ENCODE measurements at regions of chr11 and their contacts with region 1.

Region 1: DNA sequence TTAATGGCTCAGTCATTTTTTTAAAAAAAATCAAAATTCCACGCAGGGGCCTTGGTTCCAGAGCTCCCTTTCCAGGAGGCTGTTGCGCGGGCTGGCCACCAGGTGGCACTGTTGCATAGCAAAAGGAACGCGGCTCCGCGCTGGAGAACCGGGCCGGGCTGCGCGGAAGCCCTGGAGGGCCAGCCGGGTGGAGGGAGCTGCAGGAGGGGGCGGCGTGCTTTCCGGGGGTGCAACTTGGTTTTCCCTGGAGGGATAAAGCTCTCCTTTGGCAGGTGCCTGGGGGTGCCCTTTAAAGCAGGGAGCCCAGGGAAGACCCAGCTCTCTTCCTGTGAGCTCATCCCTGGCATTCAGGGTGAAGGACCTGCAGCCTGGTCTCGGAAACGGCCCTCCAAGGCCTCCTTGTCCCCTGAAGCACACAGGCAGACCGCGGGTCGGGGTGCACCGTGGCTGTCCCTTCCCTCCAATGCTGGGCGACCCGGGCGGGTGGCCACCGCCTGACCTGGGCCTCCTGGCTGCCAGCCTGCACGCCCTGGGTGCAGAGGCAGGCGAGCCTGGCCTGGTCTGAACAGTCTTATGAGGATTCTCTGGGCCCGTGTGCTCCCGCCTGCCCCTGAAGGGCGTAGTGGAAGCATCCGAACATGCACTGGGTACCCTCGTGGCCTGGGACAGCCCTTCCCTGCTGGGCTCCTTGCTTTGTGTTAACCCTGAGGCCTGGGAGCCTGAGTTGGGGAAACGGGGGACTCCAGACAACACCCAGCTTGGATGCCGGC is 23.4 kb downstream of the KRTAP5-5 start:
- DNase-seq: peak; percentile 62 to 85 (median 77)
- H3K4me3 ChIP-seq: no peak overlapping the region
- H3K27ac ChIP-seq: no peak overlapping the region
- H3K4me1 ChIP-seq: no peaks in the 10 kb centered on the region
- H3K27me3 ChIP-seq: no peaks in the 10 kb centered on the region
- CTCF ChIP-seq: peak; percentile 81 to 91 (median 84)
- EP300 ChIP-seq: no peak
- POLR2A ChIP-seq: no peak

Region 2: DNA sequence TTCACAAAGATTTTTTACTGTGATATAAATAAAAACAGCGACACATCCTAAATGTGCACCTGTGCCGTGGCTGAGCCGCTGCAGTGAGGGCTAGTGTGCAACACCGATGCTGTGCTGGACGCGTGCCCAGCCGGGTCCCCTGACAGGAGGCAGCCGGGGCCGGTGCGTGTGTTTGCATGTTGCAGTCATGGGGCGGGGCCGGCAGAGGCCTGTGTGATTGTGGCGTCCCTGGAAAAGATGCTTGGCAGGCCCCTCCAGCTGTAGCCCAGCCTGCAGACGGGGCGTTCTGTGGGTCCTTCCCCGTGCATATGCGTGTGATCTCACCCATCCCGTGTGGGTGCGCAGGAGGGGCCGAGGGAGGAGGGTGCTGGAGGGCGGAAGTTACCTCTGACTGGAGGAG is 647.0 kb before region 1 on chr11:
- intact Hi-C with region 1: no loop called
- DNase-seq: peak; percentile 65 to 83 (median 74)
- H3K4me3 ChIP-seq: no peak overlapping the region
- H3K27ac ChIP-seq: peak overlapping the region in 1 of 2 donors; percentile 12
- H3K4me1 ChIP-seq: peaks cover 2% of the 10 kb centered on the region
- H3K27me3 ChIP-seq: no peaks in the 10 kb centered on the region
- CTCF ChIP-seq: no peak
- EP300 ChIP-seq: no peak
- POLR2A ChIP-seq: no peak

Region 3: DNA sequence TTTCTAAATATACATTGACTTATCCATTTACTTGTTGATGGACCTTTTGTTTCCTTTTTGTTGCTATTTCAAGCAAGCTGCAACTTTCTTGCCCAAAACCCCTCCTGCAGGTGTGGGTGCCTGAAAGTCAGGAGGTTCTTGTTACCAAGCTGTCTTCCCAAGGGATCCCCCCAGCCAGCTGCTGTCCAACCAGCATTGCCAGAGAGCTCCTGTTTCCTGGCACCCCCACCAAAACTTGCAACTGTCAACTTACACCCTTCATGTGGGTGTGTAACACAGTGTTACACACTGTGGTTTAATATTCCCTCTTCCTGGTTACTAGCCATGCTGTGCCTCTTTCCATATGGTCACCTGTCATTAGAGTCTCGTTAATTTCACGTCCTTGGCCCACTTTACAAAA is 66.3 kb before region 1 on chr11:
- intact Hi-C with region 1: no loop called
- DNase-seq: no peak
- H3K4me3 ChIP-seq: no peak overlapping the region
- H3K27ac ChIP-seq: no peak overlapping the region
- H3K4me1 ChIP-seq: no peaks in the 10 kb centered on the region
- H3K27me3 ChIP-seq: no peaks in the 10 kb centered on the region
- CTCF ChIP-seq: no peak
- EP300 ChIP-seq: no peak
- POLR2A ChIP-seq: no peak

Region 4: DNA sequence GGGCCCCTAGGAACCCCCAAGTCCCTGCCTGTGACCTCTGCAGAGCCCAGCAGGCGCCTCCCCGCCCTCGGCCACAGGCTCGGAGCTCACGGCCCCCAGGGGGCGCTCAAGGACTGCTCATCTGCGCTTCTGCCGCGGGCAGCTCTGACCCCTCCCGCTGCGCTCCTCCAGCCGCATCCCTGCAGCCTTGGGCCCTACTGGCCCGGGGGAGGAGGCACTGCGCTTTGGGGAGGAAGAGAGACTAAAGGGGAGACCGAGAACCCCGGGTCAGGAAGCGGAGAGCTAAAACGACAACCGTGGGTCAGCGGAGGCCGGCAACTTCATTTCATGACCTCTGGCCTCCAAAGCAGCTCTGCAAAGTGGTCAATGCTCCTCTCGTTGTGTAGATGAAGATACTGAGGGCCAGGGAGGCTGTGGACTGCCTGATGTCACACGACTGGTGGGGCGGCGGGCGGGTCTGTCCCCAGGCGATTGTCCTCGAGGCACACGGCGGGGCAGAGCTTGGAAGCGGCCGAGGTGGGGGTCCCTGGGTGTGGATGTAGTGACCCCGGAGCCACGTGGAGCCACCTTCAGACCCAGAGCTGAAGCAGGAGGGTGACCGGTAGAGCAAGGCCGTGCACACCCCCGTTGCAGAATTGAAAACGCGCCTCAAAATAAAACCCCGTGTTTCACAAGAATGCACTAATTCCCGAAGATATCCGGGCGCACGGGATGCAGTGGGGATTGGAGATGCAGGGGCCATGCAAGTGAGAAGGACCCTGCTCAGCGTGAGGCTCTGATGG is 41.3 kb after region 1 on chr11:
- intact Hi-C with region 1: loop called in 2 of 4 experiments (anchors 5 kb)
- DNase-seq: peak; percentile 73 to 92 (median 89)
- H3K4me3 ChIP-seq: peak overlapping the region; percentile 6
- H3K27ac ChIP-seq: peak overlapping the region in 1 of 2 donors; percentile 16
- H3K4me1 ChIP-seq: peaks cover 8% of the 10 kb centered on the region
- H3K27me3 ChIP-seq: no peaks in the 10 kb centered on the region
- CTCF ChIP-seq: peak; percentile 82 to 91 (median 85)
- EP300 ChIP-seq: no peak
- POLR2A ChIP-seq: no peak

Region 5: GRCh38 chr11:1825039-1825740 is 172.2 kb after region 1 on chr11:
- intact Hi-C with region 1: loop called in 2 of 4 experiments (anchors 5 to 10 kb)
- DNase-seq: no peak
- H3K4me3 ChIP-seq: no peak overlapping the region
- H3K27ac ChIP-seq: no peak overlapping the region
- H3K4me1 ChIP-seq: no peaks in the 10 kb centered on the region
- H3K27me3 ChIP-seq: no peaks in the 10 kb centered on the region
- CTCF ChIP-seq: no peak
- EP300 ChIP-seq: no peak
- POLR2A ChIP-seq: no peak

Region 6: GRCh38 chr11:1832211-1832919 is 179.4 kb after region 1 on chr11:
- intact Hi-C with region 1: loop called in 3 of 4 experiments (anchors 2 to 10 kb)
- DNase-seq: peak; percentile 33 to 75 (median 62)
- H3K4me3 ChIP-seq: no peak overlapping the region
- H3K27ac ChIP-seq: no peak overlapping the region
- H3K4me1 ChIP-seq: no peaks in the 10 kb centered on the region
- H3K27me3 ChIP-seq: no peaks in the 10 kb centered on the region
- CTCF ChIP-seq: peak; percentile 82 to 96 (median 86)
- EP300 ChIP-seq: no peak
- POLR2A ChIP-seq: no peak

Region 7: GRCh38 chr11:1837171-1838076 is 184.5 kb after region 1 on chr11:
- intact Hi-C with region 1: loop called in 2 of 4 experiments (anchors 2 to 10 kb)
- DNase-seq: peak; percentile 69 to 88 (median 78)
- H3K4me3 ChIP-seq: no peak overlapping the region
- H3K27ac ChIP-seq: no peak overlapping the region
- H3K4me1 ChIP-seq: peaks cover 1% of the 10 kb centered on the region
- H3K27me3 ChIP-seq: no peaks in the 10 kb centered on the region
- CTCF ChIP-seq: peak; percentile 54 to 90 (median 84)
- EP300 ChIP-seq: no peak
- POLR2A ChIP-seq: no peak

Measured in ovary (tissue), 10 donors.